ENCODE measurements at regions of chr16 and their contacts with region 1.

Region 1: DNA sequence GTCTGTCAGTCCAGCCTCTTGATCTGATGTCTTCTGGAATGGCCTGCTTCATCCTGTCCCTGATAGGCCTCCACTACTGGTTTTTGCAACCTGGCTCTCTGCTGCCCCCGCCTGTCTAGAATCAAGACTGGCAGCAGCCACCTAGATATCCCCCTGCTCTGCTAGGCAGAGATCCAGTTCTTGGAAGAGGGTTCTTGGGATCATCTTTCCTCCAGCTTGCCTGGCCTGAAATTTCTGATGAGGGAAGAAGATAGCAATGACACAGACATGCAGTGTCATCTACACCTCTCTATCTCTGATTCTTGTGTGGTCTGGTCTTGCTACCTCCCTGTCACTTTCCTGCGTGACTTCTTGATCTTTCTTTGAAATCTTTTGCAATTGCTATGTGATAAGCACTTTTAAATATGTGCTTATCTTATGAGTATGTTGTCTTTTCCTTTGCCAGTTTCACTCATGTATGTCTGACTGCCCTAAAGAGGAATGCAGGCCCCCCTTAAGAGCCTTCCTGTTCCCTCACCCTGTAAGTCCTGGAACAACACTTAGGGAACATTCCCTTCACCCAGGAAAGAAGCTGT is 20.3 kb upstream of the NFATC3 start:
- DNase-seq: peak; percentile 76
- H3K4me3 ChIP-seq: no peak overlapping the region
- H3K27ac ChIP-seq: no peak overlapping the region
- H3K4me1 ChIP-seq: peaks cover 5% of the 10 kb centered on the region
- H3K27me3 ChIP-seq: no peaks in the 10 kb centered on the region
- CTCF ChIP-seq: peak; percentile 87

Region 2: DNA sequence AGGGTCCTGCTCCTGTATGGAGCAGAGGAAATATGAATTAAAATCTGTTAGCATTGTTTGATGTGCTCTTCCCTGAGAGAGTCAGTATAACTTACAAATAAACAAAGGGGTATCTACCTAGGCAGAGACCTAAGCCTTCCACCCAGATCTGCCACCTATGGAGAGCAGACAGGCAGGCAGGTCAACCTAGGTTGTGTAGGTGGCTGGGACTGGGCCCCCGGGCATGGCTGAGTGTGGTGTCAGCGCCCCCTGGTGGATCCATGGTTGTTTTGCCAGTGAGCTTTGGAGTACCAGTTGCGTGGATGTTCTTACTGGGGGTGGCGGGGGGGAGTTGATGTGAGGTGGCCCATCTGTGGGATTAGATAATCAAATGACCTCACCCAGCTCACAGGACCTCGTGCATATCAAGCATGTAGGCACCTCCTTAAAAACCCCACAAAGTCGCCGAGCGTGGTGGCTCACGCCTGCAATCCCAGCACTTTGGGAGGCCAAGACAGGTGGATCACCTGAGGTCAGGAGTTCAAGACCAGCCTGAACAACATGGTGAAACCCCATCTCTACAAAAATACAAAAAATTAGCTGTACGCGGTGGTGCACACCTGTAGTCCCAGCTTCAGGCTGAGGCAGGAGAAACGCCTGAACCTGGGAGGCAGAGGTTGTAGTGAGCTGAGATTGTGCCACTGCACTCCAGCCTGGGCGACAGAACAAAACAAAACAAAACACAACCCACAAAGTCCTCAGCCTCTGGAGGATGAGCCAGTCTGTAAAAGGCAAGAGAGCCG is 24.2 kb before region 1 on chr16:
- CTCF ChIA-PET with region 1: interaction called, 13 read pairs
- POLR2A ChIA-PET with region 1: interaction called, 3 read pairs
- intact Hi-C with region 1: no loop called
- DNase-seq: peak; percentile 72
- H3K4me3 ChIP-seq: no peak overlapping the region
- H3K27ac ChIP-seq: no peak overlapping the region
- H3K4me1 ChIP-seq: no peaks in the 10 kb centered on the region
- H3K27me3 ChIP-seq: no peaks in the 10 kb centered on the region
- CTCF ChIP-seq: peak; percentile 91